ENCODE measurements at regions of chr1 and their contacts with region 1.

Region 1: GRCh38 chr1:241749901-241750695 is 97.9 kb upstream of the EXO1 start:
- DNase-seq: no peak
- ATAC-seq: peak; percentile 26
- H3K4me3 ChIP-seq: no peak overlapping the region
- H3K27ac ChIP-seq: no peak overlapping the region
- H3K4me1 ChIP-seq: peaks cover 0 to 2% of the 10 kb centered on the region in 2 donors
- H3K27me3 ChIP-seq: no peaks in the 10 kb centered on the region

Region 2: DNA sequence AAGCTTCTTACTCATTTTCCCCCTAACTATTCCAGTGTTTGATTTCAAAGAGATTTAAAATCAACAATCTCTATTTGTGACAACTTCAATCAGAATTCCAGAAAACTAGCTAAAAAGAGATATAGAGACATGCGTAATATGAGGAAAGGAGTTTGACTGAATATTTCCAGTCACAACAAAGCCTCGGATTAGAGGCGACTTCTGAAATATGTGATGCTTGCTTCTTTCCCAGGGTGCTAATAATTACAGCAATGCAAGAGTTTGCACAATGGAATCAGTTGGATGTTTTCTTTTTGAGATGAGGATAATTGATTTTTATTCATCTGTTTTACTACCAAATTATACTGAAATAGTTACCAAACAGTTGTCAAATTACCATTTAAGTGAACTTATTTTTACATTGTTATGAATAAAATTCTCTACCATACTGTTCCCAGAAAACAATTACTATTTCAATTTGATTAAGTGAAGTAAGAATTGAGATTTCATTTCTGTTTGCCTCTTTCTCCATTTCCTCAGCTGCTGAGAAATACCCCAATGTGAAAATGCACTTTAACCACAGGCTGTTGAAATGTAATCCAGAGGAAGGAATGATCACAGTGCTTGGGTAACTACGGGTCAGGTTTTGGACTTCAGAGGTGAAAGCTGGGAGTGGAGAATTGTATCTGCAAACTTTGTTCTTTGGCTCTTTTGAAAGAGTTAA is 189.8 kb before region 1 on chr1:
- intact Hi-C with region 1: no loop called
- DNase-seq: no peak
- ATAC-seq: no peak
- H3K4me3 ChIP-seq: no peak overlapping the region
- H3K27ac ChIP-seq: no peak overlapping the region
- H3K4me1 ChIP-seq: no peaks in the 10 kb centered on the region
- H3K27me3 ChIP-seq: no peaks in the 10 kb centered on the region

Region 3: GRCh38 chr1:241640029-241640818 is 109.9 kb before region 1 on chr1 and contains the starts of genes CHML and OPN3:
- intact Hi-C with region 1: loop called in 1 of 2 experiments (anchors 5 kb)
- DNase-seq: peak; percentile 96 to 98
- ATAC-seq: peak; percentile 99
- H3K4me3 ChIP-seq: peak within 1 kb of the TSS; percentile 86 to 96
- H3K27ac ChIP-seq: peak within 1 kb of the TSS in 1 of 2 donors; percentile 53
- H3K4me1 ChIP-seq: no peaks in the 10 kb centered on the region
- H3K27me3 ChIP-seq: no peaks in the 10 kb centered on the region
- total RNA-seq, gene CHML: 9.9 to 13.3 TPM
- total RNA-seq, gene OPN3: 5.8 to 6.5 TPM

Region 4: DNA sequence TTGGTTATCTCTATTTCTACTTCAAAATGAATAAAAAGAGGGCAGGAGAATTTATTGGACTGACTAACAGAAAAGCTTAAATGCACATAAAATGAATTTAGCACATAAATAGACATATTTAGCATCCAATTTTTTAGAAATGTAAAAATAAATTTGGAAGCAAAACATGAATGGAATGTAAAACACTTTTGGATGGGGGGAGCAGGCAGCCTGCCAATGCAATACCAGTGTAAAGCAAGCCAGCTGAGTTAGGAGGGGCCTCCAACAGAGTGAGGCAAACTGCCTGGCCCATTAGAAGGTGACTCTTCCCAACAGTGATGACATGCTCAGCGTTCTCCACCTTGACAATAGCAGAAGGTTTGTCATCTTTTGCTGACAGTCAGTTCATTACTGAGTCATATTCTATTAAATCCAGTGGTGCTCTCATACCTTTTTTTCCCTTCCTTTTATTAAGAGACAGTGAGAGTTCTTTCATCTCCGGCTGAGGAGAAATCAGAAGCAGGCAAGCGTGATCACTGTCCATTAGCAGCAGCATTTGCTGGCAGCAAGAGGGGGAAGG is 78.4 kb after region 1 on chr1:
- intact Hi-C with region 1: loop called in 1 of 2 experiments (anchors 5 kb)
- DNase-seq: no peak
- ATAC-seq: no peak
- H3K4me3 ChIP-seq: no peak overlapping the region
- H3K27ac ChIP-seq: peak overlapping the region in 1 of 2 donors; percentile 33
- H3K4me1 ChIP-seq: peaks cover 0 to 1% of the 10 kb centered on the region in 2 donors
- H3K27me3 ChIP-seq: no peaks in the 10 kb centered on the region

Measured in aorta (tissue), 5 donors.